Activated CD4-positive, alpha-beta memory T cell treated with anti-CD3 and anti-CD28 coated beads for 36 hours (primary cell): ENCODE measurements at regions of chr17 and their contacts with region 1.

Region 1: DNA sequence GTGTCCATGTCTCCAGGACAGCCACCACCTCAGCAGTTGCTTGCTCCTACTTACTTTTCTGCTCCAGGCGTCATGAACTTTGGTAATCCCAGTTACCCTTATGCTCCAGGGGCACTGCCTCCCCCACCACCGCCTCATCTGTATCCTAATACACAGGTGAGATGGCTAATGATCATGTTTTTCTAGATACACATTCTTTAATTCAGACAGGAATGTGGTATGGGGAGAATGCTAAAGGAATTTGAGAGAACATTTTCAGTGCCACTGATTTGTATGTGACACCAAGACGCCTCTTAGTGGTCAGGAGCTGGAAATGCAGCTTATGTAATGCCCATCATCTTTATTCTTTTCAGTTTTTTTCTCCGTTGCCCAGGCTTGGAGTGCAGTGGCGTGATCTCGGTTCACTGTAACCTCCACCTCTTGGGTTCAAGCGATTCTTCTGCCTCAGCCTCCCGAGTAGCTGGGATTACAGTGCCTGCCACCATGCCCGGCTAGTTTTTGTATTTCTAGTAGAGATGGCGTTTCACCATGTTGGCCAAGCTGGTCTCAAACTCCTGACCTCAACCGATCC is 8.9 kb upstream of the RAPGEFL1 start:
- DNase-seq: peak; percentile 34
- H3K4me3 Mint-ChIP-seq: no peak overlapping the region
- H3K27ac Mint-ChIP-seq: peak overlapping the region; percentile 1
- H3K4me1 Mint-ChIP-seq: peaks cover 3% of the 10 kb centered on the region
- H3K27me3 Mint-ChIP-seq: no peaks in the 10 kb centered on the region

Region 2: GRCh38 chr17:40130352-40131042 is 37.9 kb before region 1 on chr17:
- CTCF ChIA-PET with region 1: interaction called, 11 read pairs
- POLR2A ChIA-PET with region 1: no interaction called
- intact Hi-C with region 1: no loop called
- DNase-seq: no peak
- H3K4me3 Mint-ChIP-seq: no peak overlapping the region
- H3K27ac Mint-ChIP-seq: peak overlapping the region; percentile 32
- H3K4me1 Mint-ChIP-seq: peaks cover 4% of the 10 kb centered on the region
- H3K27me3 Mint-ChIP-seq: no peaks in the 10 kb centered on the region

Region 3: GRCh38 chr17:40157973-40158372 is 10.4 kb before region 1 on chr17:
- CTCF ChIA-PET with region 1: interaction called, 35 read pairs
- POLR2A ChIA-PET with region 1: interaction called, 3 read pairs
- intact Hi-C with region 1: loop called (anchors 1 kb)
- DNase-seq: no peak
- H3K4me3 Mint-ChIP-seq: no peak overlapping the region
- H3K27ac Mint-ChIP-seq: peak overlapping the region; percentile 50
- H3K4me1 Mint-ChIP-seq: peaks cover 44% of the 10 kb centered on the region
- H3K27me3 Mint-ChIP-seq: no peaks in the 10 kb centered on the region

Region 4: GRCh38 chr17:40219073-40219860 is 50.9 kb after region 1 on chr17 and contains the start of gene WIPF2:
- CTCF ChIA-PET with region 1: interaction called, 15 read pairs
- POLR2A ChIA-PET with region 1: no interaction called
- intact Hi-C with region 1: no loop called
- DNase-seq: peak; percentile 99
- H3K4me3 Mint-ChIP-seq: peak within 1 kb of the TSS; percentile 86
- H3K27ac Mint-ChIP-seq: peak within 1 kb of the TSS; percentile 92
- H3K4me1 Mint-ChIP-seq: peaks cover 27% of the 10 kb centered on the region
- H3K27me3 Mint-ChIP-seq: no peaks in the 10 kb centered on the region
- total RNA-seq, gene WIPF2: 19.0 to 20.6 TPM